Left ventricle myocardium superior (tissue), 1 donor: ENCODE measurements at regions of chr10 and their contacts with region 1.

Region 1: GRCh38 chr10:14491806-14492205 is 161.1 kb upstream of the FRMD4A start:
- DNase-seq: no peak
- ATAC-seq: no peak

Region 2: DNA sequence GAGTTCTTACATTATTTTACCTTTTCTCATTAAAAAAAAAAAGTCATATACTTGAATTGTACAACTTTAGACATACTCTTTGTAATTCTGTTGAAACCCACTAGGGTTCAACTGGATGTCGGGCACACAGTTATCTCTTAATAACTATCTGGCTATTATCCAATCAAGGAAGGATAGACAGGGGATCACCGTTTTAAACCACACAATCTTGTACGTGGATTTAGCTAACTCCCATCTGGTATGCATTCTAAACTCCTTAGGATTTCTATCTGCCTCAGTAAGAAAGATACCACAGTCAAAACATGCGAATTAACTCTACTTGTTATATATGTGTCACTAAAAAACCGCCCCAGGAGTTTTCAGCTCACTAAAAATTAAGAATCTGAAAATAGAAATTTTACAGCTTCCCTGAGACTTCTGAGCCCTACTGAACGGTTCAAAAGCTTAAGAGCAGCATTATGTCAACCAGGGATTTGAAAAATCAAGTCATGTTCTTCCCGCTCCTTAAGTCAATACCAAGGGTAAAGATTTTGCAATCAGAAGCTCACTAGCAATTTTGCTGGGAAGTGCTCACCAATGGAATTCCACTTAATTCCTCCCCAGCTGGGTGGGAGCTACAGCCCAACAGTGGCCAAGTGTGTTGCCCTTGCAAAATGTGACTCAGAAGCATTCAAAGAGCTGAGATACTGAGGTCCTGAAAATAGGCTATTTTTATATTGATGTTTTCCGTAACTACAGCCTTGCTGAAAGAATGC is 428.1 kb before region 1 on chr10:
- intact Hi-C with region 1: no loop called
- DNase-seq: no peak
- ATAC-seq: peak; percentile 93

Region 3: DNA sequence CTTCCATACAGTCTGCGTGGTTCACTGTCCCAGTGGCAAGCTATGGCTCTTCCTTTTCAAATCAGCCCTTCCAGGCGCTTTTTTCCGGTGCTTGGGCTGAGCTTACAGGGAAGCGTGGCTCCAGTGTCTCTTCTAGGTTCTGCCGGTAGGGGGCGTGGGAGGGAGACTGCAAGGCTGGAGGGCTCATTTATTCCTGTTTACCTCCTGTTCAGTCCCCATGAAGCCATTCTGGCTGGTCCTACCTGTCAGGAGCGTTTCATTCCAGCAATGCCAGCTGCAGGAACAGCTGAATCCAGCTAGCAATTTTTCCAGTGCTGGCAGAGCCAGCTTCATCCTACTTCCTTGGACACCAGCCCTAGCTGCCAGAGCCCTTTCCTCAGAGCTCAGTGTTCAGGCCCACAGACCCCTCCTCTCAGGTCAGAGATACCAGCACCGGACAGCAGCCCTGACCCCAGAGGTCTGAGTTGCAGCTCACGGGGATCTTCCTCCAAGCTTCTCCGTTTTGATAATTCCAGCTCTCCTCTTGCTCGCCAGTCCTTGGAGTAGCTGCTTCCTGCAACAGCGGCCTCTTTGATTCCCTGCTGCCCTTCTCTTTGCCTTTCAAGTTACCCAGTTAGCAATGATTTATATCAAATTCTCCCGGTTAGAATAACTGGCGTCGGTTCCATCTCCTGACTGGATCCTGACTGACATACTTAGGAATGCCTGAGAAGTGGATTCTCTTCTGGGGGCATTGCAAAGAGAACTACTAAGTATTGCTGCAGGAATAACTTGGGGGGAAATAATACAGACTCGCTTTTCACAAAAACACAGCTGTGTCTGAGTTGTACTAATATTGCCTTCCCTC is 290.9 kb before region 1 on chr10:
- intact Hi-C with region 1: no loop called
- DNase-seq: no peak
- ATAC-seq: no peak

Region 4: DNA sequence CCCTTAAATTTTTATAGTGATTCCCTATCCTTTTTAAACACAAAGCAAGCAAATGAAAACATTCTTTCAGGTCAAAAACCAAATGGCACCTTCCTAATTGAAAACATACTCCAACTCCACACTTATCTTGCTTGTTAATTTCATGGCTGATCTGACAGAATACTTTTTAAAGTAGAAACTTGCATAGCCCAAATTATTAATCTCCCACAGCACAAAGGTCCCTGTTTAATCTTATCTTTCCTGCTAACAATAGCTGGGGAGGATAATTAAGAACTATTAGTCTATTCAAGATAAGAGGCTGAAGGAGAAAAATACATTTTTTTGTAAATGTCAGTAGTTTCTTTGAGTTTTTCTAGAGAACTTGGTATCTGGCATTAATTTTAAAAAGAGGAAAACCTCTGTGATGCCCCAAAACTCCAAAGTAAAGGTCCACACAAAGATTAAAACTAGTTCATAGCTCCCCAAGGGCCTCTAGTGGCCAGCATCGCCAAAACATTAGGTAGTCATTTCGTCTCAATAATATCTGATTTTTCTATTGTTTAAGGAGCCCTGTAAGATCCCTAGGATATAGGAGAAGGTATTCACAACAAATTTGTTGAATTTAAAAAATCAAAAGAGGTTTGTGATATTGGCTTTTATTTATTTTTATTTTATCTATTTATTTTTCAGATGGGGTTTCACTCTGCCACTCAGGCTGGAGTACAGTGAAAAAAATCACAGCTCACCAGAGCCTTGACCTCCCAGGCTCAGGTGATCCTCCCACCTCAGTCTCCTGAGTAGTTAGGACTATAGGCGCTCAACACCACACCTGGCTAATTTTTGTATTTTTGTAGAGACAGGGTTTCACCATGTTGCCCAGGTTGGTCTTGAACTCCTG is 331.3 kb after region 1 on chr10:
- intact Hi-C with region 1: loop called (anchors 10 kb)
- DNase-seq: no peak
- ATAC-seq: peak; percentile 38